Ascending aorta (tissue), 2 donors: ENCODE measurements at regions of chr15 and their contacts with region 1.

Region 1: GRCh38 chr15:58933281-58934113 is at the start of gene SLTM:
- DNase-seq: peak; percentile 73 to 98
- H3K4me3 ChIP-seq: peak within 1 kb of the TSS; percentile 83 to 92
- H3K27ac ChIP-seq: peak within 1 kb of the TSS; percentile 98
- H3K4me1 ChIP-seq: peaks cover 0 to 13% of the 10 kb centered on the region in 2 donors
- H3K27me3 ChIP-seq: no peaks in the 10 kb centered on the region
- CTCF ChIP-seq: peak in 2 of 3 experiments; percentile 20 to 24
- total RNA-seq, gene SLTM: 109 TPM

Region 2: GRCh38 chr15:58770857-58771620 is 162.5 kb before region 1 on chr15 and contains the start of gene MINDY2:
- intact Hi-C with region 1: loop called (anchors 1 kb)
- DNase-seq: peak; percentile 93 to 99
- H3K4me3 ChIP-seq: peak within 1 kb of the TSS; percentile 70 to 96
- H3K27ac ChIP-seq: peak within 1 kb of the TSS; percentile 92 to 99
- H3K4me1 ChIP-seq: peaks cover 3 to 25% of the 10 kb centered on the region in 2 donors
- H3K27me3 ChIP-seq: no peaks in the 10 kb centered on the region
- CTCF ChIP-seq: peak in 2 of 3 experiments; percentile 29 to 31
- total RNA-seq, gene MINDY2: 10.4 TPM

Region 3: GRCh38 chr15:59148153-59148833 is 214.8 kb after region 1 on chr15:
- intact Hi-C with region 1: no loop called
- DNase-seq: no peak
- H3K4me3 ChIP-seq: no peak overlapping the region
- H3K27ac ChIP-seq: peak overlapping the region; percentile 12 to 40
- H3K4me1 ChIP-seq: peaks cover 7 to 13% of the 10 kb centered on the region in 2 donors
- H3K27me3 ChIP-seq: no peaks in the 10 kb centered on the region
- CTCF ChIP-seq: no peak

Region 4: DNA sequence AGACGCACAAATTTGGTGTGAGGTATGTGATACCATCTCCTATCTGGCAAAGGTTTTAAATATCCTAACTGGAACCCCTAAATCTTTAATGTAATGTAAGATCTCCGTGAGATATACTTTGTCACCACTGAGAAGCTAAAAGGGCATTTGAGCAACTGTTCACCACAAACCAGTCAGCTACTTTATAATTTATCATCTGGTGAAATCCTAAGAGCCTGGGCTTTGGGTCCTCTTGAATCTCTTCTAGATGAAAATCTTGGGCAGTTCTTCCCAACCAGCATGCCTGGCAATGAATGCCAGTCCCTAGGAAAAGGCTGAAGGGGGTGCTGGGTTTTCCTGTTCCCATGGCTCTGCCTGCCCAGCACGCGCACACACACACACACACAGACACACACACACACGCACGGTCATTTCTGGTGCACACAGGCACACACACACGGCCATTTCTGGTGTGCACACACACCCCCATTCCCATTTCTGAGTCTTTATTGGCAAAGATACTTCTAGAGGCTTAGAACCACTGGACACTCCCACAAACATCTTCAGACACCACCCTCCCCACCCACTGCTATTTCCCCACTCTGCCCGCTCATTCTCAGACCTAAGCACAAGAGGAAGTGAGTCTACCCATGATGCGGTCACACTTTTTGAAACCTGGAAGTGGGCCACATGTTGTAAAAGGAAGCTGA is 366.6 kb after region 1 on chr15:
- intact Hi-C with region 1: loop called (anchors 5 kb)
- DNase-seq: peak; percentile 81 to 96
- H3K4me3 ChIP-seq: peak overlapping the region in 1 of 2 donors; percentile 23
- H3K27ac ChIP-seq: peak overlapping the region; percentile 61 to 64
- H3K4me1 ChIP-seq: peaks cover 16 to 53% of the 10 kb centered on the region in 2 donors
- H3K27me3 ChIP-seq: no peaks in the 10 kb centered on the region
- CTCF ChIP-seq: no peak

Region 5: GRCh38 chr15:59437817-59438562 is 504.5 kb after region 1 on chr15 and contains the start of gene FAM81A:
- intact Hi-C with region 1: loop called (anchors 2 kb)
- DNase-seq: peak; percentile 11 to 92
- H3K4me3 ChIP-seq: peak within 1 kb of the TSS; percentile 59 to 83
- H3K27ac ChIP-seq: peak within 1 kb of the TSS in 1 of 2 donors; percentile 15
- H3K4me1 ChIP-seq: peaks cover 0 to 12% of the 10 kb centered on the region in 2 donors
- H3K27me3 ChIP-seq: no peaks in the 10 kb centered on the region
- CTCF ChIP-seq: no peak
- total RNA-seq, gene FAM81A: not detected